ENCODE measurements at regions of chr3 and their contacts with region 1.

Region 1: GRCh38 chr3:177337541-177338331 is 140.5 kb upstream of the TBL1XR1 start:
- DNase-seq: no peak
- H3K4me3 ChIP-seq: no peak overlapping the region
- H3K27ac ChIP-seq: peak overlapping the region; percentile 84
- H3K4me1 ChIP-seq: peaks cover 4% of the 10 kb centered on the region
- H3K27me3 ChIP-seq: no peaks in the 10 kb centered on the region
- CTCF ChIP-seq: no peak

Region 2: GRCh38 chr3:177300039-177300833 is 37.5 kb before region 1 on chr3:
- intact Hi-C with region 1: loop called (anchors 5 kb)
- DNase-seq: peak; percentile 86
- H3K4me3 ChIP-seq: no peak overlapping the region
- H3K27ac ChIP-seq: peak overlapping the region; percentile 87
- H3K4me1 ChIP-seq: no peaks in the 10 kb centered on the region
- H3K27me3 ChIP-seq: no peaks in the 10 kb centered on the region
- CTCF ChIP-seq: no peak

Region 3: GRCh38 chr3:177679568-177680441 is 342.1 kb after region 1 on chr3:
- intact Hi-C with region 1: no loop called
- DNase-seq: no peak
- H3K4me3 ChIP-seq: no peak overlapping the region
- H3K27ac ChIP-seq: no peak overlapping the region
- H3K4me1 ChIP-seq: no peaks in the 10 kb centered on the region
- H3K27me3 ChIP-seq: no peaks in the 10 kb centered on the region
- CTCF ChIP-seq: no peak